Activated T-helper 1 cell treated with anti-CD3 and anti-CD28 coated beads, Interleukin-12 subunit alpha, Interleukin-12 subunit beta, Interleukin-2, Interleukin-4 antibody, amounts not matched to agents 30 ng/mL and 10 ng/mL and 1 ng/mL, durations not matched to agents 14 hours and 24 hours and 36 hours (primary cell): ENCODE measurements at regions of chr9 and their contacts with region 1.

Region 1: DNA sequence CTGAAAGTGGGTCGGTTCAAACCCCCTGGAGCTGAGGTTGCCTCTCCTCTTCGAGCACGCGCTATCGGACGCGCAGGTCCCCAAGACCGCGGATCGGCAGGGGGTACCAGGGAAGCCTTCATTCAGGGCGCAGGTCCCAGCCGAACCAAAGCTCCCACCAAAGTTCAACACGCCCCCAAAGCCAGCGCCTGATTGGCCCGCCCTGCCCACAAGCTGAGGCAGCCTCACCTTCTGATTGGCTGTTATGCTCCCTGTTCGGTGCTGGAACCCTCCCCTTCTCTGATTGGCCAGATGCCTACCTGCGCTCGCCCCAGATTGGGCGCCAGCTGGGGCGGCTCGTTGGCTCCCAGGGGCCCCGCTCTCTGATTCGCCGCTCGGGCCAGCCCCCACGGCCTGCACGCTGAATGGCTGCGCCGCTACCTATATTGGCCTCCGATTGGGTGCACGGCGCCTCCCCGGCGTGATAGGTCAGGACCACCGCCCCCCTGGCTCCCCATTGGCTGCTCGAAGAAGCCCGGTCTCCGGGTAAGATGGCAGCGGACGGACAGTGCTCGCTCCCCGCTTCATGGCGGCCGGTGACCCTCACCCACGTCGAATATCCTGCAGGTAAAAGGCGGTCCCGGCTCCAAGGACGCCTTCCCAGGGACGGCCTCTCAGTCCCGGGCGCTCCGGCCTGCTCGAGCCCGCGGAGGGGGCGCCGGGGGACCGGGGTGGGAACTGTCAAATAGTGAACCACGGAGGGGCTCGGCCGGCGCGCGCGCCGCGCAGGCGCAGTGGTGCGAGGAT is at the start of gene DOLPP1:
- DNase-seq: peak; percentile 99
- H3K4me3 Mint-ChIP-seq: peak within 1 kb of the TSS; percentile 94
- H3K27ac Mint-ChIP-seq: peak within 1 kb of the TSS; percentile 82
- H3K4me1 Mint-ChIP-seq: peaks cover 17% of the 10 kb centered on the region
- H3K27me3 Mint-ChIP-seq: peaks cover 2% of the 10 kb centered on the region
- total RNA-seq, gene DOLPP1: 28.4 and 30.2 TPM in 2 replicates

Region 2: DNA sequence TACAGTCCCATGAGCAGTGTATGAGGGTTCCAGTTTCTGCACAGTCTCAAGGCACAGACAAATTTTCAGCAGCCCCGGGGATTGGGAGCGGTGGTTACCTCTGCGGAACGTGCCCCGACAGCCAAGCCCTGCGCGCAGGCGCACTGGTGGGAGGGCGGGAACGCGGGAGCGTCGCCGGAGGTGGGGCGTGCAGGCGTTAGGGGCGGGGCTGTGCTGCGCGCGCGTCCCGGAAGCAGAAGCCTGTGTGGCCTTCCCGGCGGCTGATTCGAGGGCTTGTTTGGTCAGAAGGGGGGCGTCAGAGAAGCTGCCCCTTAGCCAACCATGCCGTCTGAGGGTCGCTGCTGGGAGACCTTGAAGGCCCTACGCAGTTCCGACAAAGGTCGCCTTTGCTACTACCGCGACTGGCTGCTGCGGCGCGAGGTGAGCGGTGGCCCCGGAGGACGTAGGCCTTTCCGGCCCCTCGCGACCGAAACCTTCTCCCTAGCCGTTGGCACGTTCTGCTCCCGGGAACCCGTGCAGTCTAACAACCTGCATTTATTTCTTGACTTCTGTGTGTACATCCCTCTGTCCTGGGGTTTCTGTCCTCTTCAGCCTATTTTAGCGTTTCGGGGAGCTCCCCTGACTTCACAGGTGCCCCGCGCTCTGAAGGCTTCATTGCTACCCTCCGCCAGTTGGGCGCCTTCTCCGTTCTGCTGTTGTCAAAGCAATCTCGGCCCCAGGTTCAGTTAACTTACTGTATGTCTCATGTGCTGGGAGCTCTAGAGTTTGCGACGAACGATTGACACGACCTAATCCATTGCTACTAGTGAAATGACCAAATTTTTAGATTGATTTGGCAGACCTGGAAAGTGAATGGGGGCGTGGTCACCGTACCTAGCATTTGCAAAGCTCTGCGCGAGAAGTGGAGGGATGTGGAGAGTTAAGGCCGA is 576.0 kb before region 1 on chr9 and contains the start of gene GLE1:
- intact Hi-C with region 1: loop called (anchors 2 kb)
- DNase-seq: peak; percentile 97
- H3K4me3 Mint-ChIP-seq: peak within 1 kb of the TSS; percentile 99
- H3K27ac Mint-ChIP-seq: peak within 1 kb of the TSS; percentile 99
- H3K4me1 Mint-ChIP-seq: peaks cover 23% of the 10 kb centered on the region
- H3K27me3 Mint-ChIP-seq: no peaks in the 10 kb centered on the region
- total RNA-seq, gene GLE1: 51.4 and 52.0 TPM in 2 replicates

Region 3: GRCh38 chr9:128688512-128689292 is 392.1 kb before region 1 on chr9 and contains the start of gene SET:
- intact Hi-C with region 1: loop called (anchors 5 kb)
- DNase-seq: peak; percentile 93
- H3K4me3 Mint-ChIP-seq: peak within 1 kb of the TSS; percentile 87
- H3K27ac Mint-ChIP-seq: peak within 1 kb of the TSS; percentile 98
- H3K4me1 Mint-ChIP-seq: peaks cover 66% of the 10 kb centered on the region
- H3K27me3 Mint-ChIP-seq: no peaks in the 10 kb centered on the region
- total RNA-seq, gene SET: 775 and 795 TPM in 2 replicates

Region 4: DNA sequence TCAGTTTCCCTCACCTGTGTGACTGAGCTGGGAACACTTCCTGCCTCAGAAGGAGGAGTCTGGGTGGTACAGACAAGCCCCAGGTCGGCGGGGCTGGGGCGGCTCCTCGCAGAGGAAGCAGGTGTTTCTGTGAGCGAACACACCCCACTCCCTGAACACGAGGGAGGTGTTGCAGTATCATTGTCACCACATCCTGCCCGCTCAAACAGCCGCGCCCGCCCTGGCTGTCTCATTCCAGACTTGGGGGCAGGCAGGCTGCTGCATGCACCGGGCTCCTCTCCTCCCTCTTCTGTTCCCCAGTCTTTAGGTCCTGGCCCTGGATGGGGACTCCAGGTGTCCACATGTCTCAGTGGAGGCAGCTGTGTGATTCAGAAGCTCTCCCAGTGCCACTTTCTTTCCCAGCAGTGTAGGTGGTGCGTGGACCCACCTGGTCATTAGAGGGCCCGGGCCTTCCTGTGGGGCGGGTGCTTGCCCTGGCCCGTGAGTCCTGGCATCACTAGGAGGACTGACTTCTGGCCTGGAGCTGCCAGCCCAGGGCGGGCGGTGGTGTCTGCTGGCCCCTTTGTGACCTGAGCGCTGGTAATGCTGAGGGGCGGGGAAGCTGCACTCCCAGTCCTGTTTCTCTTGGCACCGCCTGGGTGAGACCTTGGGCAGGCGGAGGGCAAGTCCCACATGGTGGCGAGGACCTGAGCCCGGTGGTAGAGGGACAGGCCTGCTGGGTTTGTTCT is 178.3 kb before region 1 on chr9:
- intact Hi-C with region 1: loop called (anchors 5 kb)
- DNase-seq: peak; percentile 83
- H3K4me3 Mint-ChIP-seq: peak overlapping the region; percentile 66
- H3K27ac Mint-ChIP-seq: peak overlapping the region; percentile 96
- H3K4me1 Mint-ChIP-seq: peaks cover 65% of the 10 kb centered on the region
- H3K27me3 Mint-ChIP-seq: no peaks in the 10 kb centered on the region

Region 5: GRCh38 chr9:129028192-129028957 is 52.4 kb before region 1 on chr9 and contains the start of gene SH3GLB2:
- intact Hi-C with region 1: loop called (anchors 1 kb)
- DNase-seq: peak; percentile 85
- H3K4me3 Mint-ChIP-seq: peak within 1 kb of the TSS; percentile 91
- H3K27ac Mint-ChIP-seq: peak within 1 kb of the TSS; percentile 80
- H3K4me1 Mint-ChIP-seq: peaks cover 24% of the 10 kb centered on the region
- H3K27me3 Mint-ChIP-seq: no peaks in the 10 kb centered on the region
- total RNA-seq, gene SH3GLB2: 71.1 and 74.8 TPM in 2 replicates

Region 6: GRCh38 chr9:129036241-129036922 is 44.4 kb before region 1 on chr9 and contains the start of gene MIGA2:
- intact Hi-C with region 1: loop called (anchors 1 kb)
- DNase-seq: peak; percentile 95
- H3K4me3 Mint-ChIP-seq: peak within 1 kb of the TSS; percentile 97
- H3K27ac Mint-ChIP-seq: peak within 1 kb of the TSS; percentile 79
- H3K4me1 Mint-ChIP-seq: peaks cover 20% of the 10 kb centered on the region
- H3K27me3 Mint-ChIP-seq: peaks cover 2% of the 10 kb centered on the region
- total RNA-seq, gene MIGA2: 43.4 and 43.8 TPM in 2 replicates

Region 7: DNA sequence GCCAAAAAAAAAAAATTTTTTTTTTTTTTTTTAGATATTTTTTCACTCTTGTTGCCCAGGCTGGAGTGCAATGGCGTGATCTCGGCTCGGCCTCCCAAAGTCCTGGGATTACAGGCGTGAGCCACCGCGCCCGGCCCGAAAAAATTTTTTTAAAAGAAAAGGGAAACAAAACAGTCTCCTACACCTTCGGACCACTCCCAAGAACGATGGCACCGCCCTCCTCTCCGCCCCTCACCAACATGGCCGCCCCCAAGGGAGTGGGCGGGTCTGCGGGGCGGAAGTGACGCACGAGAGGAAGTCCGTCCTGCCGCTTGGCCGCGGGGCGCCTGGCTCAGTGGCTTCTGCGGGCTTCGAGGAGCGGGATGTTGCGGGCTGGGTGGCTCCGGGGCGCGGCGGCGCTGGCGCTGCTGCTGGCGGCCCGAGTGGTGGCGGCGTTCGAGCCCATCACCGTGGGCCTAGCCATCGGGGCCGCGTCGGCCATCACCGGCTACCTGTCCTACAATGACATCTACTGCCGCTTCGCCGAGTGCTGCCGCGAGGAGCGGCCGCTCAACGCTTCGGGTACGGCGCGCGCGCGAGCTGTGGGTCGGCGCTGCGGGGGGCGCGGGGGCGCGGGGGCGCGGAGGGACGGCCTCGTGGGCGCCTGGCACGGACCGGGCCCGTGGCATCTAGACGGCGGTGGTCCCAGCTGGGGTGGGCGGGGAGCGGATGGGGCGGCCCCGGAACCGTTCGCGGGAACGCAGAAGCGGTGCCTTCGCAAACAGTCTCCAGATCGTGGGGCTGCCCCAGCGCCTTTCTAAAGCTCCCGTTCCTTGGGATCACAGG is 722.3 kb after region 1 on chr9 and contains the start of gene TOR1B:
- intact Hi-C with region 1: loop called (anchors 1 kb)
- DNase-seq: peak; percentile 94
- H3K4me3 Mint-ChIP-seq: peak within 1 kb of the TSS; percentile 90
- H3K27ac Mint-ChIP-seq: peak within 1 kb of the TSS; percentile 90
- H3K4me1 Mint-ChIP-seq: peaks cover 31% of the 10 kb centered on the region
- H3K27me3 Mint-ChIP-seq: no peaks in the 10 kb centered on the region
- total RNA-seq, gene TOR1B: 21.9 and 25.6 TPM in 2 replicates